ENCODE measurements at regions of chr3 and their contacts with region 1.

Region 1: DNA sequence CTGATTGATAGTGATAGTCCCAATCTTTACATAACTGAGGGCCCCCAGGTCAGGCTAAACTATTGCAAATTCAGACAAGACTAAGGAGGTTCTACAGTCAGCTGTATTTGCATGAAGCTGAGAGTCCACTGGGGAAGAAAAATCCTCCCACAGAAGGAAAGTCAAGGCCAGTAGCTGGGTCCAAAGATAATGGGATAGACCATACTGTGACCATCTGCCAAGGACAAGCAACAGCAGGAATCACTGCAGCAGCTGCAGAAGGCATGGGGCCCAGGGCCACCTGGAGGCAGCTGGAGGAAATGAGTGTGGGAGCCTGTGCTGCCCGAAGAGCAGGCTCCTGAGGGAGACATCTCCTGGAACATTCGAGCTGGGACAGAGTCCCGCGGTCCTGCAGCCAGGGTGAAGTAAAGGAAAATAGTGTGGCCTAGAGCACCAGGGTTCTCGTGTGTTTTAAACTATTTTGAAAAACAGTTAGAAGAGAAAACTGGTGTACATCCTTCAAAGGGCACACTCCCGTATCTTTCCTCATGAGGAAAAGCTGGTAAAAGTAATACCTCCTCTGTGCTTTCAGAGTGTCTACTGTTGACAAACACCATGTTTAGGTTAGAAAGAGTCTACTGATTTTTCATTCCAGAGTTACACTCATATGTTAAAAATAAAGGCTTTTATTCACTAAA is 13.2 kb upstream of the TMEM212 start:
- DNase-seq: peak; percentile 88
- H3K4me3 Mint-ChIP-seq: no peak overlapping the region
- H3K27ac Mint-ChIP-seq: no peak overlapping the region
- H3K4me1 Mint-ChIP-seq: peaks cover 28% of the 10 kb centered on the region
- H3K27me3 Mint-ChIP-seq: no peaks in the 10 kb centered on the region
- CTCF ChIP-seq: peak; percentile 85

Region 2: DNA sequence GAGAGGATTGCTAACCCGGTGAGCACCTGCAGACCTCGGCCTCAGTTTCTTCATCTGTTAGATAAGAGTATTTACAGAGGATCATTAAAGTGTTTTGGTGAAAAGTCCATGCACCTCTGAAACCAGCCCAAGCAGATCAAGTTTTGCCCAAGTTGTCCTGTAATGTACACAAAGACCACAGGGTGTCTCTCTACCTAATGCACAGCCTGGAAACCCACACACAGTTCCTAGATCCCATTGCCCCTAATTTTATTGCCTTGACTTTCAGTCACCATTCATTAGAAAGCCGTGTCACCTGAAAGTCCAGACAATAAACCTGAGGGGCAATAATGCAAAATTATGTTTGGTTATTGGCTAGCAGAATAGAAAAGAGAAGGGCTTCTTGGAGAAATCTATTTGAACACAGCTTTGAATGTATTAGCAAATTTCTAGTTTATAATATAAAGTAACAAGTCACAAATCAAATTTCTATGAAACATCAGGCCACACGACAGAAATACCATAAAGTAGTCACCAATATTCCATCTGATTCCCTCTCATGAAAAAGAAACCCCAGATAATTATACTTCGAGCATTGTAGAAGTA is 642.2 kb before region 1 on chr3:
- CTCF ChIA-PET with region 1: no interaction called
- POLR2A ChIA-PET with region 1: no interaction called
- intact Hi-C with region 1: loop called (anchors 10 kb)
- DNase-seq: peak; percentile 60
- H3K4me3 Mint-ChIP-seq: no peak overlapping the region
- H3K27ac Mint-ChIP-seq: no peak overlapping the region
- H3K4me1 Mint-ChIP-seq: peaks cover 22% of the 10 kb centered on the region
- H3K27me3 Mint-ChIP-seq: no peaks in the 10 kb centered on the region
- CTCF ChIP-seq: peak; percentile 70

Region 3: GRCh38 chr3:171646357-171647133 is 183.4 kb before region 1 on chr3:
- CTCF ChIA-PET with region 1: interaction called, 80 read pairs
- POLR2A ChIA-PET with region 1: interaction called, 7 read pairs
- intact Hi-C with region 1: loop called (anchors 1 kb)
- DNase-seq: peak; percentile 55
- H3K4me3 Mint-ChIP-seq: no peak overlapping the region
- H3K27ac Mint-ChIP-seq: no peak overlapping the region
- H3K4me1 Mint-ChIP-seq: no peaks in the 10 kb centered on the region
- H3K27me3 Mint-ChIP-seq: no peaks in the 10 kb centered on the region
- CTCF ChIP-seq: peak; percentile 73

Region 4: DNA sequence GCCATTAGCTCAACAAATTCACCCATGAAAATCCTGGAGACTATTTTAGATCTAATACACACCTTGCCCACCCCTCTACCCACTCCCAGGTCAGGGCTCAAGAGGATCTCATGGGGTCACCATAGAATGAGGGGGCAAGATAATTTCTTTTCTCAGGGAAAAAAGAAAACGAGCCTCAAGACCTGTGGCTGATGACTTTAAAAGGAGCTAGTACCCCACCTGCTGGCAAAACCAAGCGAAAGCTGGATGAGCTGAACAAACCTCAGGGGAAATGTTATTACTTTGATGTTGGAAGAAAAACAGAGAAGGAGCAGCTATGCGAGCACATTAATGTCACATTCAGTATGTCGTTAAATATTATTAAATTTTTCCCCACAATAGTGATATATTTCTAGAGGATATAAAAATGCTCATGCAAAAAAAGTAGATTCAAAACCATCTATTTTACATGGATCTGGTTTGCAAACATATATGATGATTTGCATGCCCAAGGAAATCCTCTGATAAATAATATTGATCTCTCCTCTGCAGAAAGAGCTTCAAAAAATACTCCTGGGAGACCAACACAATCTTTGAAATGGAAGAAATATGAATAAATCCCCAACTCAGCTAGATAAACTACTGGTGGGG is 57.4 kb before region 1 on chr3:
- CTCF ChIA-PET with region 1: interaction called, 103 read pairs
- POLR2A ChIA-PET with region 1: interaction called, 11 read pairs
- intact Hi-C with region 1: loop called (anchors 1 kb)
- DNase-seq: peak; percentile 78
- H3K4me3 Mint-ChIP-seq: no peak overlapping the region
- H3K27ac Mint-ChIP-seq: no peak overlapping the region
- H3K4me1 Mint-ChIP-seq: peaks cover 25% of the 10 kb centered on the region
- H3K27me3 Mint-ChIP-seq: no peaks in the 10 kb centered on the region
- CTCF ChIP-seq: peak; percentile 70

Region 5: GRCh38 chr3:171809821-171810628 is 20.0 kb before region 1 on chr3 and contains the start of gene PLD1:
- CTCF ChIA-PET with region 1: interaction called, 40 read pairs
- POLR2A ChIA-PET with region 1: interaction called, 67 read pairs
- intact Hi-C with region 1: loop called (anchors 1 kb)
- DNase-seq: peak; percentile 90
- H3K4me3 Mint-ChIP-seq: peak within 1 kb of the TSS; percentile 87
- H3K27ac Mint-ChIP-seq: peak within 1 kb of the TSS; percentile 98
- H3K4me1 Mint-ChIP-seq: peaks cover 38% of the 10 kb centered on the region
- H3K27me3 Mint-ChIP-seq: no peaks in the 10 kb centered on the region
- CTCF ChIP-seq: no peak
- total RNA-seq, gene PLD1: 8.0 and 14.8 TPM in 2 replicates